ENCODE measurements at regions of chr12 and their contacts with region 1.

Region 1: GRCh38 chr12:110280779-110281548 is at the start of gene ATP2A2:
- DNase-seq: peak; percentile 94
- ATAC-seq: peak; percentile 87
- H3K4me3 Mint-ChIP-seq: peak within 1 kb of the TSS; percentile 85
- H3K27ac Mint-ChIP-seq: peak within 1 kb of the TSS; percentile 86
- H3K4me1 Mint-ChIP-seq: peaks cover 40% of the 10 kb centered on the region
- H3K27me3 Mint-ChIP-seq: peaks cover 3% of the 10 kb centered on the region
- total RNA-seq, gene ATP2A2: 116 to 130 TPM

Region 2: DNA sequence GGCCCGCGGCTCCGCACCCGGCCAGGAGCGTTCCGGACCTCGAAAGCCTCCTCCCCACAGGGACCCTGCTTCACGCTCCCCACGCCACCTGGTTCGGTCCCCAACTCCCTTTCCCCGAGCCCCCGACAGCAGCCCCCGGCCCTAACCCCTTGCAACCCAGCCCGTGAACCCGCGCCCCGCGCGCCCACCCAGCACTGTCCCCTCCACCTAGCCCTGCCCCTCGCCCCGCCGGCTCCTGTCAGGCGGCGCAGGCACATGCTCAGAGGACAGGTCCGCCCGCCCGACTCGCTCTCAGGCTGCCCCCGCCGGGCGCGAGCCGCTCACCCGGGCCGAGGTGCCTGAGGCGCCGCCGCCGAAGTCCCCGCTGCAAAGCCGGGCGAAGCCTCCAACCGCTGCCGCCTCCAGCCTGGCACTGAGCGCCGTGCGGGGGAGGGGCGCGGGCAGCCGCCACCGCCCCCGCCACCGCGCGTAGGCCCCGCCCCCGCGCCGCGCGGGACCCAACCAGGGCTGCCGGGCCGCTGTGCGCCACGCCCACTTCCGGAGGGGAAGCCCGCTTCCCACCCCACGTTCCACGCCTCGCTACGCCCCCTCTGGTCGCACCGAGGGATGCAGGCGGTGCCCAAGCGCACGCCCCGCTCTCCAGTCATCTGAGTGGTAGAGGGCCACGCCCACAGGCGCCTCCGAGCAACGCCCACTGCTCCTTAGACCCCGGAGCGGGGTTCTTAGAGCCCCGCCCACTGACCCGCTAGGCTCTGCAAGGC is 1549.7 kb before region 1 on chr12 and contains the start of gene CORO1C:
- CTCF ChIA-PET with region 1: no interaction called
- POLR2A ChIA-PET with region 1: no interaction called
- intact Hi-C with region 1: loop called in 1 of 2 experiments (anchors 5 kb)
- DNase-seq: peak; percentile 98
- ATAC-seq: peak; percentile 78
- H3K4me3 Mint-ChIP-seq: peak within 1 kb of the TSS; percentile 88
- H3K27ac Mint-ChIP-seq: peak within 1 kb of the TSS; percentile 93
- H3K4me1 Mint-ChIP-seq: peaks cover 36% of the 10 kb centered on the region
- H3K27me3 Mint-ChIP-seq: no peaks in the 10 kb centered on the region
- total RNA-seq, gene CORO1C: 83.5 to 90.8 TPM

Region 3: GRCh38 chr12:109880016-109880931 is 400.7 kb before region 1 on chr12 and contains the start of gene GLTP:
- CTCF ChIA-PET with region 1: no interaction called
- POLR2A ChIA-PET with region 1: no interaction called
- intact Hi-C with region 1: loop called in 1 of 2 experiments (anchors 2 kb)
- DNase-seq: peak; percentile 93
- ATAC-seq: peak; percentile 97
- H3K4me3 Mint-ChIP-seq: peak within 1 kb of the TSS; percentile 86
- H3K27ac Mint-ChIP-seq: peak within 1 kb of the TSS; percentile 88
- H3K4me1 Mint-ChIP-seq: peaks cover 36% of the 10 kb centered on the region
- H3K27me3 Mint-ChIP-seq: no peaks in the 10 kb centered on the region
- total RNA-seq, gene GLTP: 24.2 to 26.9 TPM

Region 4: DNA sequence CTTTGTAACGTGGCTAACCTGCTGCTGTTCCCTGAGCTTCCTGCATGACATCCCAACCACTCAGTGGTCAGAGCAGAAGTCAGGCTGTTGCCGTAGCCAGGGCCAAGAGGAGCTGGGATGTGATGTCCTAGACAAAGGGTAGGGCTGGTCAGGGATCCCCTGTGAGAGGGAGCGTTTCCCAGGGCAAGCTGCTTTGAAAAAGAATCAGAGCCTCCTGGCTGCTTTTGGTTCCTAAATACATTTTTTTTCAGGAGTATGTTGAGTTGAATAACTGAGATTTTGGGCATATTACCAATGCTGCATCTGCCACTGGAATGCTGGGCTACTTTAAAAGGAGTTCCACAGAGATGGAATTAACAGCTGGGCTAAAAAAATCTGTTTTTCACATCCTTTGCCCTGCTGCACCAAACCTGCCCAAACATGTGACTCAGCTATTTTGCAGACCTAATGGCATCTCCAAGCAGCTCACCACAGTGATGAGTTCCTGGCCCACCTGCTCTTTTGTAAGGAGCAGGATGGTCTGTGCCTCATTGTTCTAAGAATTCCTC is 257.8 kb before region 1 on chr12:
- CTCF ChIA-PET with region 1: no interaction called
- POLR2A ChIA-PET with region 1: no interaction called
- intact Hi-C with region 1: no loop called
- DNase-seq: no peak
- ATAC-seq: no peak
- H3K4me3 Mint-ChIP-seq: no peak overlapping the region
- H3K27ac Mint-ChIP-seq: no peak overlapping the region
- H3K4me1 Mint-ChIP-seq: peaks cover 17% of the 10 kb centered on the region
- H3K27me3 Mint-ChIP-seq: no peaks in the 10 kb centered on the region

Region 5: DNA sequence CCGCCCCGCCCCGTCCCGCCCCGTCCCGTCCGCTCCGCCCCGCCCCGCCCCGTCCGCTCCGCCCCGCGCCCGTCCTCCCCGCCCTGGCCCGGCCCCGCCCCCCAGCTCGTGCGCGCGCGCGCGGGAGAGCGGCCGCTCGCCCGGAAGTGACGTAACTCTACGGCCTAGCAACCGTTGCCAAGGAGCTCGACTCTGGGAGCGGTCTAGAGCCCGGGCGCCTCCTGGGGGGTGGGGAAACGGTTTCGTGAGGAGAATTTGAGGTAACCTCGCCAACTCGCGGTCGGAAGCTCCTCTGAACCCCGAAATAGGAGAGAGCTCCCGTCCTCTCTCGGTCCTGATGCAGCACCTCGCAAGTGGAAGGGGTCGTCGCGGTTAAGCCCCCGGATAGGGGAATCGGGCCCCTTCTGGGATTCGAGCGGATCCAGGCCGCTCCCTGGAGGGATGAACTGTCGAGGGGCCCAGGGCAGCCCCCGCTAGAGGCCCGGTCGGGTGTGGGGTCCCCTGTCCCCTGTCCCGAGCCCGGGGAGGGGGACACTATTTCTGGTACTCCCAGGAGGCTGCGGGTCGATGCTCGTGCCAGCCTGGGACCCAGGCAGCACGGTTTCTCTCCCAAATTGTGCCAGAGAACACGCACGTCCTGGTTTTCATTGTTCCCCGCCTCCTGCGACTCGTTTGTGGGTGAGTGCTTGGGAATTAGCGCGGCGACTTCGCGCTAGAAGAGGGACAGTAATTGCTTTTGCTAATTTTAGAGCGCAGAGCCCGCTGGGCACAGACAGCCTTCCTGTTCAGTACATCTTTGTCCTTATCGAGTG is 156.6 kb before region 1 on chr12 and contains the start of gene IFT81:
- CTCF ChIA-PET with region 1: interaction called, 5 read pairs
- POLR2A ChIA-PET with region 1: no interaction called
- intact Hi-C with region 1: loop called (anchors 1 to 2 kb)
- DNase-seq: peak; percentile 98
- ATAC-seq: peak; percentile 91
- H3K4me3 Mint-ChIP-seq: peak within 1 kb of the TSS; percentile 83
- H3K27ac Mint-ChIP-seq: peak within 1 kb of the TSS; percentile 81
- H3K4me1 Mint-ChIP-seq: peaks cover 7% of the 10 kb centered on the region
- H3K27me3 Mint-ChIP-seq: peaks cover 4% of the 10 kb centered on the region
- total RNA-seq, gene IFT81: 3.5 TPM

Region 6: DNA sequence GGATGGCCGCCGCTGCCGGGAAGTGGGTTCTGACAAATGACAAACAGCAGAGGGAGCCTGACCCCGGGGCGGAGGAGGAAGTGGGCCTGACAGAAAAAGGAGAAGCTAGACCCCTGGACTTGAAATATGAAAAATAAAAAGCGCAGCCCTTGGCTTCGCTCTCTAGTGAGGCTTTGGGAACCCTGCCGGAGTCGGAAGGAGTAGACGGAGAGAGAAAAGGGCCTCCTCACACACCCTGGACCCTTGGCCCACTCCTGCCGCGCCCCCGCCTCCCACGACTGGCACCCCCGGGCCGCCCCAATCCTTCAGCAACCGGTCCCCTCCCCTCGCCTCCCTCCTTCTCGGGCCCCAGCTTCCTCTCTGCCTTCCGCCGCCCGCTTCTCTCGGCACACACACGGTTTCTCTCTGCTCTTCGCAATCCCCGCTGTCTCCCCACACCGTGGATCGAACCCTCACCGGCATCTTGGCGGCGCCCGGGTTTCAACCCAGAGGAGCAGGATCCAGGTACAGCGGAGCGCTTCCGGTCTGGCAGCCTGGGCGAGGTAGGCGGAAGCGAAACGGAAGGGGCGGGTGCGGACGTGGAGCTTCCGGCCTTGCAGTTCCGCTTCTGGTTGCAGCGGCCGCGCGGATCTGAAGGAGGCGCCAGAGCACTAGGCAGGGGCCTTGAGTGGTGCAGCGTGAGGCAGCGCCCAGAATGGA is 169.0 kb after region 1 on chr12 and contains the start of gene ARPC3:
- CTCF ChIA-PET with region 1: no interaction called
- POLR2A ChIA-PET with region 1: no interaction called
- intact Hi-C with region 1: loop called in 1 of 2 experiments (anchors 1 kb)
- DNase-seq: peak; percentile 98
- ATAC-seq: peak; percentile 99
- H3K4me3 Mint-ChIP-seq: peak within 1 kb of the TSS; percentile 97
- H3K27ac Mint-ChIP-seq: peak within 1 kb of the TSS; percentile 100
- H3K4me1 Mint-ChIP-seq: peaks cover 38% of the 10 kb centered on the region
- H3K27me3 Mint-ChIP-seq: no peaks in the 10 kb centered on the region
- total RNA-seq, gene ARPC3: 244 to 422 TPM

Region 7: GRCh38 chr12:110613771-110614684 is 333.1 kb after region 1 on chr12 and contains the start of gene TCTN1:
- CTCF ChIA-PET with region 1: no interaction called
- POLR2A ChIA-PET with region 1: no interaction called
- intact Hi-C with region 1: loop called in 1 of 2 experiments (anchors 10 kb)
- DNase-seq: peak; percentile 99
- ATAC-seq: peak; percentile 99
- H3K4me3 Mint-ChIP-seq: peak within 1 kb of the TSS; percentile 78
- H3K27ac Mint-ChIP-seq: peak within 1 kb of the TSS; percentile 67
- H3K4me1 Mint-ChIP-seq: peaks cover 12% of the 10 kb centered on the region
- H3K27me3 Mint-ChIP-seq: no peaks in the 10 kb centered on the region
- total RNA-seq, gene TCTN1: 7.2 to 7.3 TPM

Measured in activated CD4-positive, alpha-beta T cell treated with anti-CD3 and anti-CD28 coated beads for 36 hours (primary cell).